ENCODE measurements at regions of chr12 and their contacts with region 1.

Region 1: GRCh38 chr12:835754-836518 is 83.6 kb downstream of the WNK1 start:
- DNase-seq: no peak
- ATAC-seq: no peak
- H3K4me3 ChIP-seq: no peak overlapping the region
- H3K27ac ChIP-seq: no peak overlapping the region
- H3K4me1 ChIP-seq: no peaks in the 10 kb centered on the region
- H3K27me3 ChIP-seq: no peaks in the 10 kb centered on the region
- CTCF ChIP-seq: no peak
- POLR2A ChIP-seq: no peak
- RAD21 ChIP-seq: no peak

Region 2: GRCh38 chr12:779745-780734 is 55.9 kb before region 1 on chr12:
- CTCF ChIA-PET with region 1: no interaction called
- POLR2A ChIA-PET with region 1: no interaction called
- dilution Hi-C with region 1: no loop called
- in situ Hi-C with region 1: no loop called
- intact Hi-C with region 1: loop called (anchors 1 kb)
- DNase-seq: peak; percentile 74
- ATAC-seq: peak; percentile 86
- H3K4me3 ChIP-seq: no peak overlapping the region; the same call in 1 of the 2 replicates
- H3K27ac ChIP-seq: peak overlapping the region; percentile 74
- H3K4me1 ChIP-seq: peaks cover 3% of the 10 kb centered on the region; the same call in 1 of the 2 replicates
- H3K27me3 ChIP-seq: no peaks in the 10 kb centered on the region
- CTCF ChIP-seq: no peak
- POLR2A ChIP-seq: no peak
- RAD21 ChIP-seq: no peak

Region 3: DNA sequence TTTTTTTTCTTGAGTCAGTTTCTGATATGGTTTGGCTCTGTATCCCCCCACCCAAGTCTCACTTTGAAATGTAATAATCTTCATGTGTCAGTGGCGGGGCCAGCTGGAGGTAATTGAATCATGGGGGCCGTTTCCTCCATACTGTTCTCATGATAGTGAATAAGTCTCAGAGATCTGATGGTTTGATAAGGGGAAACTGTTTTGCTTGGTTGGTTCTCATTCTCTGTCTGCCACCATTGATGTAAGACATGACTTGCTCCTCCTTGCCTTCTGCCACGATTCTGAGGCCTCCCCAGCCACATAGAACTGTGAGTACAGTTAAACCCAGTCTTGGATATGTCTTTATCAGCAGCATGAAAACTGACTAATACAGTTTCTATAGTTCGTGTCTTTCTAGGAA is 40.6 kb before region 1 on chr12:
- CTCF ChIA-PET with region 1: no interaction called
- POLR2A ChIA-PET with region 1: no interaction called
- dilution Hi-C with region 1: no loop called
- in situ Hi-C with region 1: no loop called
- intact Hi-C with region 1: no loop called
- DNase-seq: no peak
- ATAC-seq: no peak
- H3K4me3 ChIP-seq: no peak overlapping the region
- H3K27ac ChIP-seq: no peak overlapping the region
- H3K4me1 ChIP-seq: peaks cover 2% of the 10 kb centered on the region
- H3K27me3 ChIP-seq: no peaks in the 10 kb centered on the region
- CTCF ChIP-seq: no peak
- POLR2A ChIP-seq: no peak
- RAD21 ChIP-seq: no peak

Measured in IMR-90 (cell line).